CD4-positive, alpha-beta memory T cell (primary cell): ENCODE measurements at regions of chr11 and their contacts with region 1.

Region 1: GRCh38 chr11:63855975-63856749 is 17.3 kb downstream of the MARK2 start:
- DNase-seq: no peak
- H3K4me3 ChIP-seq: no peak overlapping the region
- H3K4me3 Mint-ChIP-seq: peak overlapping the region in 5 of 8 donors; percentile 7 to 35 (median 13)
- H3K27ac ChIP-seq: no peak overlapping the region
- H3K27ac Mint-ChIP-seq: peak overlapping the region in 5 of 7 donors; percentile 24 to 91 (median 47)
- H3K4me1 ChIP-seq: peaks cover 62% of the 10 kb centered on the region
- H3K4me1 Mint-ChIP-seq: peaks cover 33 to 67% (median 48%) of the 10 kb centered on the region in 4 donors
- H3K27me3 ChIP-seq: no peaks in the 10 kb centered on the region
- H3K27me3 Mint-ChIP-seq: no peaks in the 10 kb centered on the region

Region 2: DNA sequence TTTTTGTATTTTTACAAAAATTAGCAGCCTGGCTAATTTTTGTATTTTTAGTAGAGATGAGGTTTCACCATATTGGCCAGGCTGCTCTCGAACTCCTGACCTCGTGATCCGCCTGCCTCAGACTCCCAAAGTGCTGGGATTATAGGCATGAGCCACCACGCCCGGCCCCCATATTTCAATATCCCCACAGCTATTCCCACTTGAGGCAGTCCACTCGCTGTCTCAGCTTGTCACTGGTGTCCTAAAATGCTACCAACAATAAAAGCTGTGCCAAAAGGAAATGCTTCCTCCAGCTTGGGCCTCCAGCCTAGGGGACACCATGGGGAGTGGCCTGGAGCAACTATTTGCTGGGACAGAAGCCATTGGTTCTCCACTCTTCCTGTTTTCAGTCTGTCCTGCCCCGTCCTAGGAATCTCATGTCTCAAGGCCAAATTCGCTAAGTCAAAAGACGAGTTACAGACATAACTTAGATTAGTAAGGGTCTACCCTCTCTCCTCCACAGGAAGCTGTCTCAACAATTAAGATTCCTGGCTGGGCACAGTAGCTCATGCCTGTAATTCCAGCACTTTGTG is 50.2 kb before region 1 on chr11:
- CTCF ChIA-PET with region 1: no interaction called
- POLR2A ChIA-PET with region 1: no interaction called
- intact Hi-C with region 1: no loop called
- DNase-seq: no peak
- H3K4me3 ChIP-seq: no peak overlapping the region
- H3K4me3 Mint-ChIP-seq: no peak overlapping the region
- H3K27ac ChIP-seq: no peak overlapping the region
- H3K27ac Mint-ChIP-seq: peak overlapping the region in 1 of 7 donors; percentile 55
- H3K4me1 ChIP-seq: no peaks in the 10 kb centered on the region
- H3K4me1 Mint-ChIP-seq: no peaks in the 10 kb centered on the region
- H3K27me3 ChIP-seq: no peaks in the 10 kb centered on the region
- H3K27me3 Mint-ChIP-seq: no peaks in the 10 kb centered on the region

Region 3: GRCh38 chr11:63866211-63866610 is 10.0 kb after region 1 on chr11:
- CTCF ChIA-PET with region 1: interaction called, 6 read pairs
- POLR2A ChIA-PET with region 1: interaction called, 10 read pairs
- intact Hi-C with region 1: no loop called
- DNase-seq: peak; percentile 76 to 88 (median 82)
- H3K4me3 ChIP-seq: no peak overlapping the region
- H3K4me3 Mint-ChIP-seq: peak overlapping the region; percentile 4 to 79 (median 66)
- H3K27ac ChIP-seq: peak overlapping the region; percentile 30
- H3K27ac Mint-ChIP-seq: peak overlapping the region; percentile 81 to 92 (median 85)
- H3K4me1 ChIP-seq: peaks cover 81% of the 10 kb centered on the region
- H3K4me1 Mint-ChIP-seq: peaks cover 59 to 83% (median 75%) of the 10 kb centered on the region in 4 donors
- H3K27me3 ChIP-seq: no peaks in the 10 kb centered on the region
- H3K27me3 Mint-ChIP-seq: no peaks in the 10 kb centered on the region